ENCODE measurements at regions of chr15 and their contacts with region 1.

Region 1: GRCh38 chr15:89874926-89875564 is 18.7 kb downstream of the AP3S2 start:
- DNase-seq: peak; percentile 91

Region 2: GRCh38 chr15:89740137-89740536 is 134.9 kb before region 1 on chr15:
- CTCF ChIA-PET with region 1: interaction called, 22 read pairs
- POLR2A ChIA-PET with region 1: no interaction called
- DNase-seq: peak; percentile 87

Region 3: GRCh38 chr15:89760303-89761008 is 114.6 kb before region 1 on chr15:
- CTCF ChIA-PET with region 1: interaction called, 66 read pairs
- POLR2A ChIA-PET with region 1: interaction called, 14 read pairs
- DNase-seq: peak; percentile 93

Region 4: GRCh38 chr15:89863918-89864317 is 11.1 kb before region 1 on chr15:
- CTCF ChIA-PET with region 1: interaction called, 14 read pairs
- POLR2A ChIA-PET with region 1: interaction called, 3 read pairs
- DNase-seq: no peak

Region 5: DNA sequence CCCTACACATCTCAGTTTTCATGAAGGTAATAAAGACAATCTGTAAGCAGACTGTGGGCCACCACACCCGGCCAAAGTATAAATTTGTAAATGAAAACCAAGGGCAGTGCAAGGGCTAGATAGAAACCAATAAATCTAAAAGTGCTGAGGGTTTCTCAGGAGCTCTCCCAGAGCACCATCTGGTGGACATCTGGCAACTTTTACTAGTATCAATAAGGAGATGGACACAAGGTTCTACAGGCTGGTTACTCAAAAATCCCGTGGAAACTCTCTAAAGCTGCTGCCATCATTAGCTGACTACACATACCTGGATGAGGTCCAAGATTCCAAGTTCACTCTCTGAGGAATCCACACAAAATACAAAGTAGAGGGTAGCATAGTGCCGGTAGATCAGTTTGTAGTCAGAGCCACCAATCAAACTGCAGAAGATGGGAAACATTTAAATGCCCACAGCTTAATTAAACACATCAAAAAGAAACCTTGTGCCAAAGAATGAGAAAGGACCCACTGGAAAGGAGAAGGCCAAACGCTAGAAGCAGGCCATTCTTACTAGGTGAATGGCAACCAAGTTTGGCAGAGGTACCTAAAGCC is 13.3 kb after region 1 on chr15:
- CTCF ChIA-PET with region 1: interaction called, 15 read pairs
- POLR2A ChIA-PET with region 1: interaction called, 11 read pairs
- DNase-seq: peak; percentile 35

Region 6: GRCh38 chr15:89893696-89894455 is 18.8 kb after region 1 on chr15 and contains the start of gene AP3S2:
- CTCF ChIA-PET with region 1: interaction called, 7 read pairs
- POLR2A ChIA-PET with region 1: interaction called, 11 read pairs
- DNase-seq: peak; percentile 90

Region 7: DNA sequence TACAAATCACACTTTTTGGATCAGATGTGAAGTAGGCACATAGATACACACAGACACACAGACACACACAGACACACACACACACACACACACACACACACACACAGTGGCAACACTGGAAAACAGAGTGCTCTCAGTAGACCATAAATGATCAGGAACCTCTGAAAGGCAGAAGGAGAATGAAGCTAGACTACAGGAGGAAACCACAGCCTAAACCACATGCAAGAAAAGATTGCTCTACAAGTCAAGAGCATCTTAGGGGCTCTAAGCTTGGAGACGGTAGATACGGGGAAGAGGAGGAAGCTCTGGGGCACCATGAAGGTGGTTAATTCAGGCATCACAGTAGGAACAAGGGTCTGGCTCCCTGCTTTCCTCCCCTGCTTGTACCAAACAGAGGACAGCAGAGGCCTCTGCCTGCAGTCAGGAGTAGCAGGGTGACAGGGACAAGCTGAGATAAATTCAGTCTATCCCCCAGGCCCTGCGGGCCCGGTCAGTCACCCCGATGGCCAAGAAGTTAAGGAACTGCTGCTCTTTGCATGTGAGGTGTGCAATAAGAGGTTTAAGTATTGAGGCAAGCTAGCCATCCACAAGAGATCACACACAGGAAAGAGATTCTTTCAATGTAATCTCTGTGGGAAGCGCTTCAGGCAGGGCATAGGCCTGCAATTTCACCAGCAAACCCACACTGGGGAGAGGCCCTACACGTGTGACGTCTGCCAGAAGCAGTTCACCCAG is 61.2 kb after region 1 on chr15:
- CTCF ChIA-PET with region 1: no interaction called
- POLR2A ChIA-PET with region 1: no interaction called
- DNase-seq: no peak

Region 8: GRCh38 chr15:89982315-89983055 is 107.4 kb after region 1 on chr15:
- CTCF ChIA-PET with region 1: no interaction called
- POLR2A ChIA-PET with region 1: no interaction called
- DNase-seq: no peak

Measured in HEK293T (cell line).